Caco-2 (cell line): ENCODE measurements at regions of chr6 and their contacts with region 1.

Region 1: GRCh38 chr6:35402136-35402855 is 49.8 kb upstream of the FANCE start:
- DNase-seq: peak; percentile 80 to 82
- H3K4me3 ChIP-seq: no peak overlapping the region
- H3K4me3 Mint-ChIP-seq: no peak overlapping the region
- H3K27ac Mint-ChIP-seq: peak overlapping the region; percentile 18
- H3K4me1 ChIP-seq: peaks cover 20% of the 10 kb centered on the region
- H3K4me1 Mint-ChIP-seq: peaks cover 14% of the 10 kb centered on the region
- H3K27me3 ChIP-seq: no peaks in the 10 kb centered on the region
- H3K27me3 Mint-ChIP-seq: no peaks in the 10 kb centered on the region
- CTCF ChIP-seq: no peak

Region 2: DNA sequence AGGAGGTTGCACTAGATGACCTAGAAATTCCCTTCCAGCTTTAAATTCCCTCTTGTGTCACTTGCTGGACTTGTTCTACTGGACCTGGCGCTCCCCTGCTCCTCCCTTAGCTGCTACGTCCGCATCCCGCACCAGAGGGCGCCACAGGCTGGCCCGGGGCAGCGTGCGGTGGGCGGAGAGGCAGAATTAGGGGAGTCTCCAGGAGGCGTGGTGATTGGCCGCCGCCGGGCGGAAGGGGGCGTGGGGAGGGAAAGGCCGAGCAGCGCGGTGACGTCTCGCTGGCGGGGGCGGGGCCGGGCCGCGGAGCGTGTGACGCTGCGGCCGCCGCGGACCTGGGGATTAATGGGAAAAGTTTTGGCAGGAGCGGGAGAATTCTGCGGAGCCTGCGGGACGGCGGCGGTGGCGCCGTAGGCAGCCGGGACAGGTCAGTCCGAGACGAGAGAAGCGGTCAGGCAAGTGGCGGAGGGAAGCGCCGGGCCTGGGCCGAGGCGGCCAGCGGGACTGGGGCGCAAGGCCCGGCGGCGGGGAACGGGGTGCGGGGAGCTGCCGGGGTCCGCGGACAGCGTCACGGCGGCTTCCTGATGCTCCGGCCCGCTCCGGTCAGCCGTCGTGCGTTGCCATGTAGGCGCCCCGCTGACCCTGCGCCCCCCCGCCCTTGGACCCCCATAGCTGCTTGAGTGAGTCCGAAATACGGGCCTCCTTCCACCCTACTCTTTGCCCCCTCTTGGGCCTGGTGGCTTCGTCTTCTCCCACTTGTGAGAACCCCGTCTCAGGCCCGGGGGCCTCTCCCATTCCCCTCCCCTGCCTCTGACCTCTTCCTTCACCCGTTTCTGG is 59.8 kb before region 1 on chr6 and contains the start of gene PPARD:
- CTCF ChIA-PET with region 1: interaction called, 5 read pairs
- POLR2A ChIA-PET with region 1: no interaction called
- intact Hi-C with region 1: loop called (anchors 1 kb)
- DNase-seq: peak; percentile 97 to 99
- H3K4me3 ChIP-seq: peak within 1 kb of the TSS; percentile 84
- H3K4me3 Mint-ChIP-seq: peak within 1 kb of the TSS; percentile 85
- H3K27ac Mint-ChIP-seq: peak within 1 kb of the TSS; percentile 78
- H3K4me1 ChIP-seq: peaks cover 6% of the 10 kb centered on the region
- H3K4me1 Mint-ChIP-seq: no peaks in the 10 kb centered on the region
- H3K27me3 ChIP-seq: no peaks in the 10 kb centered on the region
- H3K27me3 Mint-ChIP-seq: no peaks in the 10 kb centered on the region
- CTCF ChIP-seq: peak; percentile 88 to 97
- total RNA-seq, gene PPARD: 11.3 and 12.0 TPM in 2 replicates

Region 3: DNA sequence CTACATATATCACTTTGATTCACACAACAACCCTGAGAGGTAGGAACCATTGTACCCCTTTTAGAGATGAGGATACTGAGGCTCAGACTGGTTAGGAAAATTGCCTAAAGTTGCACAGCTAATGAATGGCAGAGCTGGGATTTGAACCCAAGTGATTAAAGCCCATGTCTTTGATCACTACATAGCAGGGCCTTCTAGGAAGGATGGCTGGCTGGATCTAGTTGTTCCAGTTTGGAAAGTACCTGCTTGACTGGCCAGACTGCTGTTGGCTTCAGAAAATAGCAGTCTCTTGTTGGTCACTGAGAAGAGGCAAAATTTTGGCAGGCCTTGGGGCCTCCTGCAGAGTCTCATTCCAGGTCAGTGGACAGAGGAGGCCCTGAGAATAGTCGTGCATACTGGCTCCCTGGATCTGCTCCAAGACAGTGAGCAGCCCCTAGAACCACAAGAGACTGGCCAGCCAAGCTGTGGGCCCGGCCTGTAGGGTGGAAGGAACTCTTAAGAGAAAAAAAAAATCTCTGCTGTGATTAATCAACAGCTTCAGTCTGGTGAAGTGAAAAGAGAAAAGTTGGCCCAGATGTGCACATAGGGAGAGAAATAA is 42.4 kb before region 1 on chr6:
- CTCF ChIA-PET with region 1: no interaction called
- POLR2A ChIA-PET with region 1: no interaction called
- intact Hi-C with region 1: loop called (anchors 2 kb)
- DNase-seq: no peak
- H3K4me3 ChIP-seq: no peak overlapping the region
- H3K4me3 Mint-ChIP-seq: no peak overlapping the region
- H3K27ac Mint-ChIP-seq: no peak overlapping the region
- H3K4me1 ChIP-seq: peaks cover 12% of the 10 kb centered on the region; the same call in 1 of the 2 replicates
- H3K4me1 Mint-ChIP-seq: peaks cover 8% of the 10 kb centered on the region
- H3K27me3 ChIP-seq: no peaks in the 10 kb centered on the region
- H3K27me3 Mint-ChIP-seq: no peaks in the 10 kb centered on the region
- CTCF ChIP-seq: no peak

Region 4: GRCh38 chr6:35370124-35370741 is 32.1 kb before region 1 on chr6:
- CTCF ChIA-PET with region 1: no interaction called
- POLR2A ChIA-PET with region 1: no interaction called
- intact Hi-C with region 1: loop called (anchors 1 kb)
- DNase-seq: no peak
- H3K4me3 ChIP-seq: no peak overlapping the region
- H3K4me3 Mint-ChIP-seq: no peak overlapping the region
- H3K27ac Mint-ChIP-seq: peak overlapping the region; percentile 43
- H3K4me1 ChIP-seq: peaks cover 19% of the 10 kb centered on the region
- H3K4me1 Mint-ChIP-seq: peaks cover 11% of the 10 kb centered on the region
- H3K27me3 ChIP-seq: no peaks in the 10 kb centered on the region
- H3K27me3 Mint-ChIP-seq: no peaks in the 10 kb centered on the region
- CTCF ChIP-seq: no peak

Region 5: GRCh38 chr6:35415065-35415991 is 13.0 kb after region 1 on chr6:
- CTCF ChIA-PET with region 1: interaction called, 4 read pairs
- POLR2A ChIA-PET with region 1: no interaction called
- intact Hi-C with region 1: loop called (anchors 1 kb)
- DNase-seq: peak; percentile 72 to 78
- H3K4me3 ChIP-seq: no peak overlapping the region
- H3K4me3 Mint-ChIP-seq: no peak overlapping the region
- H3K27ac Mint-ChIP-seq: no peak overlapping the region
- H3K4me1 ChIP-seq: peaks cover 7% of the 10 kb centered on the region; the same call in 1 of the 2 replicates
- H3K4me1 Mint-ChIP-seq: peaks cover 16% of the 10 kb centered on the region
- H3K27me3 ChIP-seq: no peaks in the 10 kb centered on the region
- H3K27me3 Mint-ChIP-seq: no peaks in the 10 kb centered on the region
- CTCF ChIP-seq: peak; percentile 36 to 73

Region 6: DNA sequence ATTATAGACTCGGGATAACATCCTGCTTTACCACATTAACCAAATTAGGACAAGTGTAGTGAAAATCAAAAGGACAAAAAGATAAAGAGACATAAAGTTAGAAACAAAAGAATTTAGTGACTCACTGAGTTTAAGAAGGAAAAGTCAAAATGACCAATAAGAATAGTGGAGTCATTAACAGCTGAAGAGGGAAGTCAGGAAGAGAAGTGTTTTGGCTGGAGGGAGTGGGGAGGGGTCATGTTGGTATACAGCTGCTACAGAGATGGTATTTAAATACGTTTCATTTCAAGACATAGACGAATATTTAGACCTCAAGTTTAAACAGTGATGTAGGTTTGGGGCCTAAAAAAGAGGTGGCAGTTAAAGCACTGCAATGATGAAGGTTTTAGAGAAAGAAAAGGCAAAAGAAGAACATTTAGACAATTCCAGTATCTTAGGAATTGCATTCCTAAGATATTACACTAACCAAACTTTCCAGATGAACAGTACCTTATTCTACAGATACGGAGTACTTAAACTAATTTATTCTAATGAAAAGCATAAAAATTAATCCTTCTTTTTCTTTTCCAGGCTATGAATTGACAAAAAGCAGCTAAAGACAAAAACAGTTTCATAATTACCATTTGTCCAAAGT is 275.8 kb after region 1 on chr6:
- CTCF ChIA-PET with region 1: no interaction called
- POLR2A ChIA-PET with region 1: no interaction called
- intact Hi-C with region 1: no loop called
- DNase-seq: no peak
- H3K4me3 ChIP-seq: no peak overlapping the region
- H3K4me3 Mint-ChIP-seq: no peak overlapping the region
- H3K27ac Mint-ChIP-seq: no peak overlapping the region
- H3K4me1 ChIP-seq: no peaks in the 10 kb centered on the region
- H3K4me1 Mint-ChIP-seq: no peaks in the 10 kb centered on the region
- H3K27me3 ChIP-seq: no peaks in the 10 kb centered on the region
- H3K27me3 Mint-ChIP-seq: no peaks in the 10 kb centered on the region
- CTCF ChIP-seq: no peak